Mammary epithelial cell (primary cell): ENCODE measurements at regions of chr11 and their contacts with region 1.

Region 1: GRCh38 chr11:67167086-67167485 is 48.0 kb downstream of the KDM2A start:
- DNase-seq: no peak
- H3K4me3 ChIP-seq: no peak overlapping the region
- H3K27ac ChIP-seq: no peak overlapping the region
- H3K4me1 ChIP-seq: peaks cover 16% of the 10 kb centered on the region
- H3K27me3 ChIP-seq: no peaks in the 10 kb centered on the region
- CTCF ChIP-seq: no peak

Region 2: DNA sequence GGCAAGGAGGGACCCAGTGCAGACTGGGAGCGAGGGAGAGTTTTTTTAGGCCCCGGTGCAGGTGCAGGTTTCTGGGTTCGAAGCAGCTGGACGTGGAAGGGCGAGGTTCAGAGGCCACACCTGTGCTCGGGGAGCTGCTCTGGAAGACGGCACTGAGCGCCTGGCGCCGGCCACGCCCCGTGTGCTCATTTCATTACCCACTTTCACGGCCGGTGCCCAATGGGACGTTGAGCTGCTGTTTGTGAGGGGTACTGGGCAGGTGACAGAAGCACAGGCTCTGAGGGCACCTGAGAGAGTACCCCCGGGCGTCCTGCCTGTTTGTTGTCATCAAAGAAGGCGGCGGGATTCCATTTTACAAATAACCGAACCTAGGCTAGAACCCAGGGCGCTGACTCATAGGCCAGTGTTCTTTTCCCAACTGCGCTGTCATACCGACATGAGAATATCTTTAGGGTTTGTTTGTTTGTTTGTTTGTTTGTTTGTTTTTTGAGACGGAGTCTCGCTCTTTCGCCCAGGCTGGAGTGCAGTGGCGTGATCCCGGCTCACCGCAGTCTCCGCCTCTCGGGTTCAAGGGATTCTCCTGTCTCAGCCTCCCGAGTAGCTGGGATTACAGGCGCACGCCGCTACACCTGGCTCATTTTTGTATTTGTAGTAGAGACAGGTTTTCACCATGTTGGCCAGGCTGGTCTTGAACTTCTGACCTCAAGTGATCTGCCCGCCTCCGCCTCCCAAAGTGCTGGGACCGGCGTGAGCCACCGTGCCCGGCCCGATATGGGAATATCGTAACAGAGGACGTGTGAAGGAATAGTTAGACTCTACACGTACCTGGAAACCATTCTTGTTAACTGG is 421.5 kb before region 1 on chr11:
- CTCF ChIA-PET with region 1: no interaction called
- dilution Hi-C with region 1: no loop called
- in situ Hi-C with region 1: no loop called
- intact Hi-C with region 1: no loop called
- DNase-seq: peak; percentile 40
- H3K4me3 ChIP-seq: peak overlapping the region; percentile 66 to 84 (median 81)
- H3K27ac ChIP-seq: peak overlapping the region; percentile 49
- H3K4me1 ChIP-seq: peaks cover 19% of the 10 kb centered on the region
- H3K27me3 ChIP-seq: no peaks in the 10 kb centered on the region
- CTCF ChIP-seq: no peak

Region 3: DNA sequence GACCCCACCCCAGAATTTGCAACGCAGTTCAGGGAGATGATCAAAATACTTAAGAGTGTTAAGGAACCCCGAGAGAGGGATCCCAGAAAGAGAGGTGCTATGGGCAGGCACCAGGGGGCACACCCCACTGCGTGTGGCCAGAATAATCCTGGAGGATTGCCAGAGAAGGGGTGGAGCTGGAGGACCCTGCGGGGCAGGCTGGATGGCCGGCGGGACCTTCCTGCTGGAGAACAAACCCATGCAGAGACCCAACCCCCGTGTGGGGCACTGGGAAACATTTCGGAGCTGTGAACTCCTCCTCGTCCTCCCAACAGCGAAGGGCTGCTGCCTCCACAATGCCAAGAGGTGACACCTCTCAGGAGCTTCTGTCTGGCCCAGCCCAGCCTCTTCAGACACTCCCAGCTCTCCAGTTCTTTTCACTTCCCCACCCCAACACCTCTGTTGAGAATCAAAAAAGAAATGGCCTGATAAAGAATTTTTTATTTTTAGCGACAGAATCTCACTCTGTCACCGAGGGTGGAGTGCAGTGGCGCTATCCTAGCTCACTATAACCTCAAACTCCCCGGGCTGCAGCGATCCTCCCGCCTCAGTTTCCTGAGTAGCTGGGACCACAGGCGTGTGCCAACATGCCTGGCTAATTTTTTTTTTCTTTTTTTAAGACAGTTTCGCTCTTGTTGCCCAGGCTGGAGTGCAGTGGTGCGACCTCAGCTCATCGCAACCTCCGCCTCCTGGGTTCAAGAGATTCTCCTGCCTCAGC is 84.9 kb before region 1 on chr11:
- CTCF ChIA-PET with region 1: no interaction called
- dilution Hi-C with region 1: no loop called
- in situ Hi-C with region 1: no loop called
- intact Hi-C with region 1: loop called (anchors 1 kb)
- DNase-seq: no peak
- H3K4me3 ChIP-seq: no peak overlapping the region
- H3K27ac ChIP-seq: no peak overlapping the region
- H3K4me1 ChIP-seq: peaks cover 30% of the 10 kb centered on the region
- H3K27me3 ChIP-seq: no peaks in the 10 kb centered on the region
- CTCF ChIP-seq: peak in 1 of 2 donors; percentile 24

Region 4: DNA sequence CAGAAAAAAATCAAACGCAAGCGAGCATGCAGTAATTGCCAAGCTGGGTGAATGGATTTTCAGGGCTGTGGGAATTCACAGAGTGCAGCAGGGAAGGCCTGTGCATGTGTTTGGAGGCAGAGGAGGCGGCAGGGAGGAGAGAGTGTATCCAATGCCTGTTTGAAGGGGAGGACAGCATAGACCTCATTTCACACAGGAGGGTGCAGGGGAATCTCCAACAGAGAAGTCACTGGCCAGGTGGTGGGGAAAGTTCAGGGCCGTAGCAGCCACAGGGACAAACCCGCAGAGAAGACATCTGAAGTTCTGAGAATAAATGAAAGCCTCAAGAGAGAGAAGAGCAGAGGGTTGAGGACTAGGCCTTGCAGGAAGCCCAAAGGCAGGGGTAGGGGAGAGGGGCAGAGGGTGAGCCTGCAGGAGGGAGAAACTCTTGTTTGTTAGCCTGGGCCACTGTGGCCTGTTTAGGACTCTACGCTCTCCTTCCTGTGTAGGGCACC is 67.2 kb before region 1 on chr11:
- CTCF ChIA-PET with region 1: no interaction called
- dilution Hi-C with region 1: no loop called
- in situ Hi-C with region 1: no loop called
- intact Hi-C with region 1: loop called (anchors 2 kb)
- DNase-seq: no peak
- H3K4me3 ChIP-seq: no peak overlapping the region
- H3K27ac ChIP-seq: no peak overlapping the region
- H3K4me1 ChIP-seq: peaks cover 8% of the 10 kb centered on the region
- H3K27me3 ChIP-seq: no peaks in the 10 kb centered on the region
- CTCF ChIP-seq: no peak

Region 5: GRCh38 chr11:67118801-67119584 is 48.1 kb before region 1 on chr11 and contains the start of gene KDM2A:
- CTCF ChIA-PET with region 1: no interaction called
- dilution Hi-C with region 1: no loop called
- in situ Hi-C with region 1: no loop called
- intact Hi-C with region 1: loop called (anchors 5 kb)
- DNase-seq: peak; percentile 97
- H3K4me3 ChIP-seq: peak within 1 kb of the TSS; percentile 82 to 90 (median 85)
- H3K27ac ChIP-seq: peak within 1 kb of the TSS; percentile 84
- H3K4me1 ChIP-seq: peaks cover 14% of the 10 kb centered on the region
- H3K27me3 ChIP-seq: no peaks in the 10 kb centered on the region
- CTCF ChIP-seq: no peak
- total RNA-seq, gene KDM2A: 41.8 to 59.7 TPM

Region 6: GRCh38 chr11:67195971-67196456 is 28.9 kb after region 1 on chr11:
- CTCF ChIA-PET with region 1: no interaction called
- dilution Hi-C with region 1: no loop called
- in situ Hi-C with region 1: no loop called
- intact Hi-C with region 1: no loop called
- DNase-seq: no peak
- H3K4me3 ChIP-seq: no peak overlapping the region
- H3K27ac ChIP-seq: no peak overlapping the region
- H3K4me1 ChIP-seq: no peaks in the 10 kb centered on the region
- H3K27me3 ChIP-seq: no peaks in the 10 kb centered on the region
- CTCF ChIP-seq: no peak

Region 7: GRCh38 chr11:67213178-67213621 is 46.1 kb after region 1 on chr11:
- CTCF ChIA-PET with region 1: no interaction called
- dilution Hi-C with region 1: no loop called
- in situ Hi-C with region 1: no loop called
- intact Hi-C with region 1: no loop called
- DNase-seq: no peak
- H3K4me3 ChIP-seq: no peak overlapping the region
- H3K27ac ChIP-seq: no peak overlapping the region
- H3K4me1 ChIP-seq: no peaks in the 10 kb centered on the region
- H3K27me3 ChIP-seq: no peaks in the 10 kb centered on the region
- CTCF ChIP-seq: no peak